ENCODE measurements at regions of chr20 and their contacts with region 1.

Region 1: GRCh38 chr20:45095753-45096371 is 5.1 kb downstream of the KCNS1 start:
- DNase-seq: peak; percentile 55 to 61
- ATAC-seq: peak; percentile 58 to 81; a peak in 5 of 6 replicates
- H3K4me3 ChIP-seq: no peak overlapping the region
- H3K27ac ChIP-seq: no peak overlapping the region
- H3K4me1 ChIP-seq: no peaks in the 10 kb centered on the region
- CTCF ChIP-seq: peak; percentile 90
- EP300 ChIP-seq: no peak
- POLR2A ChIP-seq: no peak
- RAD21 ChIP-seq: peak; percentile 74 to 83

Region 2: DNA sequence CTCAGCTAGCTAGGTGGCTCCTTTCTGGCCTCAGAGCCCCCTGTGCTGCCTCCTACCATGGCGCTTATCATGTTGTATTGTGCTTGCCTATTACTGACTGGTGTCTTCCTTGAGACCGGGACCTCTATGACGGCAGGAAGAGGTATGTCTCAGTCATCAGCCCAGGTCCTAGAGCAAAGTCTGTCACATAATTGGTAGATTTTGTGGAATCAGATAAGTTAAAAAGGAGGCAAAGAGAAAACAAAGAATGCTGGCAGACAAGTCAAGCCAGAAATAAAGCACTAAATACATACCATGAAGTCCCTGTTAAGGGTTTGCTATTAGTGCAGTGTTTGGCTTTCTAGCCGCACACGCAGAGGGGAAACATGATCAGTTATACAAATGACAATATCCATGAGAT is 141.7 kb before region 1 on chr20:
- CTCF ChIA-PET with region 1: no interaction called
- POLR2A ChIA-PET with region 1: no interaction called
- DNase-seq: no peak
- ATAC-seq: no peak
- H3K4me3 ChIP-seq: no peak overlapping the region
- H3K27ac ChIP-seq: no peak overlapping the region
- H3K4me1 ChIP-seq: peaks cover 10% of the 10 kb centered on the region; the same call in 2 of the 3 replicates
- CTCF ChIP-seq: no peak
- EP300 ChIP-seq: no peak
- POLR2A ChIP-seq: no peak
- RAD21 ChIP-seq: no peak

Region 3: GRCh38 chr20:45020236-45020886 is 75.5 kb before region 1 on chr20:
- CTCF ChIA-PET with region 1: interaction called, 17 read pairs
- POLR2A ChIA-PET with region 1: interaction called, 3 read pairs
- DNase-seq: no peak
- ATAC-seq: no peak
- H3K4me3 ChIP-seq: no peak overlapping the region
- H3K27ac ChIP-seq: no peak overlapping the region
- H3K4me1 ChIP-seq: no peaks in the 10 kb centered on the region
- CTCF ChIP-seq: no peak
- EP300 ChIP-seq: no peak
- POLR2A ChIP-seq: no peak
- RAD21 ChIP-seq: no peak

Region 4: DNA sequence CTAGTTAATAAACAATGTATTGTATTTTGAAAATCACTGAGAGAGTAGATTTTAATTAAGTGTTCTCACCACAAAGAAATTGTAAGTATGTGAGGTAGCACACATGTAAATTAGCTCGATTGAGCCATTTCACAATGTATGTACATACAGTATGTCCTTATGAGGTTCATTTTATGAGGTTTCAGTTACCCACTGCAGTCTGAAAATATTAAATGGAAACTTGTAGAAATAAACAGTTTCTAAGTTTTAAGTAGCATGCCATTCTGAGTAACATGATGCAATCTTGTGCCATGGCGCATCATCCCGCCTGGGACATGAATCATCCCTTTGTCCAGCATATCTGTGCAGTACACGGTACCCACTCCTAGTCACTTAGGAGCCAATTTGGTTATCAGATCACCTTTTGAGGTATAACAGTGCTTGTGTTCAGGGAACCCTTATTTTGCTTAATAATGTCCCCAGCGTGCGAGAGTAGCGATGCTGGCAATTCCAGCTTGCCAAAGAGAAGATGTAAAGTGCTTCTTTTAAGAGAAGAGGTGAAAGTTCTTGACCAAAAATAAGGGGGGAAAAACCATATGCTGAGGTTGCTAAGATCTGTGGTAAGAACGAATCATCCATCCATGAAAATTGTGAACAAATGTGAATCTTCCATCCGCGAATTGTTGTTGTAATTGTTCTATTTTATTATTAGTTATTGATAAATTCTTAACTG is 59.7 kb before region 1 on chr20:
- CTCF ChIA-PET with region 1: interaction called, 19 read pairs
- POLR2A ChIA-PET with region 1: no interaction called
- DNase-seq: peak in 1 of 2 experiments; percentile 56
- ATAC-seq: peak; percentile 49 to 71; a peak in 2 of 6 replicates
- H3K4me3 ChIP-seq: no peak overlapping the region
- H3K27ac ChIP-seq: peak overlapping the region; percentile 67 to 84
- H3K4me1 ChIP-seq: peaks cover 39% of the 10 kb centered on the region
- CTCF ChIP-seq: no peak
- EP300 ChIP-seq: no peak
- POLR2A ChIP-seq: no peak
- RAD21 ChIP-seq: no peak

Region 5: GRCh38 chr20:45070932-45071632 is 24.8 kb before region 1 on chr20:
- CTCF ChIA-PET with region 1: interaction called, 36 read pairs
- POLR2A ChIA-PET with region 1: no interaction called
- DNase-seq: no peak
- ATAC-seq: no peak
- H3K4me3 ChIP-seq: no peak overlapping the region
- H3K27ac ChIP-seq: no peak overlapping the region
- H3K4me1 ChIP-seq: peaks cover 6% of the 10 kb centered on the region; the same call in 1 of the 3 replicates
- CTCF ChIP-seq: no peak
- EP300 ChIP-seq: no peak
- POLR2A ChIP-seq: no peak
- RAD21 ChIP-seq: no peak

Region 6: DNA sequence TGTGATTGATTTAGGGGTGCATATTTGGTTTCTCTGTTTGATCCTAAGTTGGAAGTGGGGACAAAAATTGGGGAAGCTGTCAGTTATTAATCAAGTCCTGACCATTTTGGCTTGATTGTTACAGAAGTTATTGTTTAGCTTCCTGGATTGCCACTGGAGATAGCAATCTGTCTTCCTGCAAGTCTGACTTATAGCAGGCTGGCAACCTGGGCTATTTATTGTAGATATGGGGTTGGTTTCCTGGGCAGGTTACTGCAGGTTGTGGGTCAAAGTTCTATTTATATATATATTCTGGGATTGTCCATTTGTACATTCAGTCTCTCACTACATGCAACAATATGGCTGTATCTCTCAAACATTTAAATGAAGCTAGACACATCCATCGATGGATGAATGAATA is 12.7 kb before region 1 on chr20:
- CTCF ChIA-PET with region 1: interaction called, 36 read pairs
- POLR2A ChIA-PET with region 1: no interaction called
- DNase-seq: no peak
- ATAC-seq: no peak
- H3K4me3 ChIP-seq: no peak overlapping the region
- H3K27ac ChIP-seq: no peak overlapping the region
- H3K4me1 ChIP-seq: no peaks in the 10 kb centered on the region
- CTCF ChIP-seq: no peak
- EP300 ChIP-seq: no peak
- POLR2A ChIP-seq: no peak
- RAD21 ChIP-seq: no peak

Region 7: DNA sequence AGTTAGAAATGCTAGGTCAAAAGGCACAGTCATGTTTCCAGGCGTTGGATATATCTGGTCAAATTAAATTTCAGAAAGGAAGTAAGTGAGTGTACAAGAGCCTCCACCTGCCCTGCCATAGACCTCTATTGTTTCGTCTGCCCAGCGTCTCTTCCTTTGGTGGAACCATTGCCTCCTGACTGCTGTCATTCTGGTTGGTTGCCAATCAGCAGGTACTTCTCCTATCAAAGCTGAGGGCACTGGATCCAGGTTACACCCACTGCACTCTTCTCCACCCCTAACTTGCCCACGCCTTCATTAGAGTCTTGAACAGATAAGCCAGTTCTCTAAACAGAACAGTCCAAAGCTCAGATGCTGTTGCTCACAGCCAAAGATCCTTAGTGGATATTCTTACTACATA is 21.7 kb after region 1 on chr20:
- CTCF ChIA-PET with region 1: interaction called, 155 read pairs
- POLR2A ChIA-PET with region 1: no interaction called
- DNase-seq: no peak
- ATAC-seq: no peak
- H3K4me3 ChIP-seq: no peak overlapping the region
- H3K27ac ChIP-seq: no peak overlapping the region
- H3K4me1 ChIP-seq: no peaks in the 10 kb centered on the region
- CTCF ChIP-seq: no peak
- EP300 ChIP-seq: no peak
- POLR2A ChIP-seq: no peak
- RAD21 ChIP-seq: no peak

Region 8: DNA sequence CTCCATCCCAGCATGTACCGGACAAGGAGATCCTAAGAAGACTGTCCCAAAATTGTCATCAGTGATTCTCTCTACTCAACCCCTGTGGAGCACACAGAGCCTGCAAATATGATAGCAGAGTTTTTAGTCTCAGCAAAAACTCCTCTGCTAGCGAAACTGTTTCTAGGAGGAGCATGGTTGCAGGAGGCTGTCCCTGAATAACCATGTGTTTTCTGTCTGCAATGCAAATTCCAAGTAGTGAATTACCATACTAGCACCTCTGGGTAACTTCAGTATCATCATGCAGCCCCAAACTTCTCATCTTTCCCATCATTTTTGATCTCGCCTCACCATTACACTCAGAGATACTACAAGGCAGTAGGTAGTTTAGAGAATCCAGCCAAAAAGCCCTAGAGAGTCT is 53.2 kb after region 1 on chr20:
- CTCF ChIA-PET with region 1: no interaction called
- POLR2A ChIA-PET with region 1: no interaction called
- DNase-seq: no peak
- ATAC-seq: no peak
- H3K4me3 ChIP-seq: no peak overlapping the region
- H3K27ac ChIP-seq: no peak overlapping the region
- H3K4me1 ChIP-seq: no peaks in the 10 kb centered on the region
- CTCF ChIP-seq: no peak
- EP300 ChIP-seq: no peak
- POLR2A ChIP-seq: no peak
- RAD21 ChIP-seq: no peak

Measured in A549 (cell line).